ENCODE measurements at regions of chr5 and their contacts with region 1.

Region 1: GRCh38 chr5:43120720-43121564 is at the start of gene ZNF131:
- DNase-seq: peak; percentile 97
- ATAC-seq: peak; percentile 87
- H3K4me3 Mint-ChIP-seq: peak within 1 kb of the TSS; percentile 85
- H3K27ac Mint-ChIP-seq: peak within 1 kb of the TSS; percentile 94
- H3K4me1 Mint-ChIP-seq: peaks cover 37% of the 10 kb centered on the region
- H3K27me3 Mint-ChIP-seq: peaks cover 4% of the 10 kb centered on the region
- total RNA-seq, gene ZNF131: 45.8 to 52.8 TPM

Region 2: DNA sequence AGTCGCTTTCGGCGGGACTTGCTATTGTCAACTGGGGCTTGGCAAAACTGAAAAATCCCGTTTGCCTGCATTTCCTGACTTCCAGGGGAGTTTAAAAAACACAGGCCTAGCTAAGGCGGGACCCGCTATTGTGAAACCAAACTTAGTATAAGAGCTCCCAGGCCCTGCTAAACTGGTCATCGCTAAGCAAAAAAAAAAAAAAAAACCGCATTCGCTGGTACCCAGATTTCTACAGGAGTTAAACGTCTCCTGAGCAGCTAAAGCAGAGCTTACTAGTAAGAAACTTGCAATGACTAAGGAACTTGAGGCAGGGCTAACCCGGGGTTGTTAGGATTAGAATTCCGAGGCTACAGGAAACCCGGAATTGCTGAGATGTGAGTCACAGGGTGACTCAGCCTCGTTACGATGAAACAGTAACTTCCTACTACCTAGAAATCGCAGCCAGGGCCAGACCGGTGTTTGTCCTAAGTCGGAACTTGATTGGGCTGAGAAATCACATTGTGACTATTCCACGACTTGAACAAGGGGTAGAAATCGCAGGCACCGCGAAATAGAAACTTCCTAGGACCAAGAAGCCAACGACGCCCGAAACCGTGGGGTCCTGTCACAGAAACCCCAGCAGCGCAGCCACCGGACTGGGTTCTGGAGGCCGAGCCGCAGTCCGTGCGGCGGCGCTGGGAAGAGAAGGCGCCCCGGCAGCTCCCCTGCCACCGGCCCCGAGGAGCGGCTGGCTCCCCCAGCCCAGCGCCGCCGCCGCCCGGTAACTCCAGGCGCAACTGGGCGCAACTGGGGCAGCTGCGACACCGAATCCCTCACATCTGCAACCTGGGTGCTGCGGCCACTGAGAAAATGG is 170.3 kb before region 1 on chr5:
- CTCF ChIA-PET with region 1: interaction called, 5 read pairs
- POLR2A ChIA-PET with region 1: interaction called, 19 read pairs
- DNase-seq: peak; percentile 73
- ATAC-seq: peak; percentile 38
- H3K4me3 Mint-ChIP-seq: peak overlapping the region; percentile 96
- H3K27ac Mint-ChIP-seq: peak overlapping the region; percentile 100
- H3K4me1 Mint-ChIP-seq: peaks cover 43% of the 10 kb centered on the region
- H3K27me3 Mint-ChIP-seq: no peaks in the 10 kb centered on the region

Region 3: DNA sequence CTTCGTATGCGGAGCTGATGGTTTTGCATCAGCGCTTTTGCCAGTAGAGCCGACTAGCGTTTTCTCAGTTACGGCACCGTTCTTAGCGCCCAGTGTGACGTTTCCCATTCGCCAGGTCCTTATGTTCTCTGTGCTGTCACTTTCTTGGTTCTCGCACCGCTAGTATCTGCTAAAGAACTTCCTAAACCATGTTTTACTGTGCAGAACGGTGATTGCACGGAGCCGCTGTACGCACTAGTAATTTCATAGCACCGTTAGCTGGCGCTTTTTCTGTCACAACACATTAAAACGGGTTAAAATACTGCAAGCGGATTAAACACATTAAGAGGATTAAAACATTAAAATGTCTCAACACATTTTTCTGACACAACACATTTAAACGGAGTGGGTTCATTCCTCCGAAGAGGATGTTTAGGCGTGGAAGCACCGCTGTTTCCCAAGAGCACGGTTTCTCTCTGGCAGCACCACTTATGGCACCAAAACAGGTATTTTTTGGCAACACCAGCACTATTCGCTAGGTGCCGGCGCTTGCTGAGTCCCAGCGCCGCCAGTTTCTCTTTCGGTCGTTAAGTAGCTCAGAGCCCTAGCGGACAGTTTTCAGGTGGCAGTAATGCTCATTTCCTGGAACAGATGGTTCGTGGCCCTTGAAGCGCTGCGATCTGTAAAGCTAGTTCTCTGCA is 101.2 kb before region 1 on chr5:
- CTCF ChIA-PET with region 1: no interaction called
- POLR2A ChIA-PET with region 1: interaction called, 20 read pairs
- DNase-seq: peak; percentile 94
- ATAC-seq: peak; percentile 73
- H3K4me3 Mint-ChIP-seq: peak overlapping the region; percentile 95
- H3K27ac Mint-ChIP-seq: peak overlapping the region; percentile 99
- H3K4me1 Mint-ChIP-seq: peaks cover 36% of the 10 kb centered on the region
- H3K27me3 Mint-ChIP-seq: no peaks in the 10 kb centered on the region

Region 4: GRCh38 chr5:43066799-43067741 is 53.9 kb before region 1 on chr5:
- CTCF ChIA-PET with region 1: interaction called, 5 read pairs
- POLR2A ChIA-PET with region 1: interaction called, 41 read pairs
- DNase-seq: peak; percentile 91
- ATAC-seq: peak; percentile 59
- H3K4me3 Mint-ChIP-seq: peak overlapping the region; percentile 94
- H3K27ac Mint-ChIP-seq: peak overlapping the region; percentile 99
- H3K4me1 Mint-ChIP-seq: peaks cover 43% of the 10 kb centered on the region
- H3K27me3 Mint-ChIP-seq: no peaks in the 10 kb centered on the region

Region 5: DNA sequence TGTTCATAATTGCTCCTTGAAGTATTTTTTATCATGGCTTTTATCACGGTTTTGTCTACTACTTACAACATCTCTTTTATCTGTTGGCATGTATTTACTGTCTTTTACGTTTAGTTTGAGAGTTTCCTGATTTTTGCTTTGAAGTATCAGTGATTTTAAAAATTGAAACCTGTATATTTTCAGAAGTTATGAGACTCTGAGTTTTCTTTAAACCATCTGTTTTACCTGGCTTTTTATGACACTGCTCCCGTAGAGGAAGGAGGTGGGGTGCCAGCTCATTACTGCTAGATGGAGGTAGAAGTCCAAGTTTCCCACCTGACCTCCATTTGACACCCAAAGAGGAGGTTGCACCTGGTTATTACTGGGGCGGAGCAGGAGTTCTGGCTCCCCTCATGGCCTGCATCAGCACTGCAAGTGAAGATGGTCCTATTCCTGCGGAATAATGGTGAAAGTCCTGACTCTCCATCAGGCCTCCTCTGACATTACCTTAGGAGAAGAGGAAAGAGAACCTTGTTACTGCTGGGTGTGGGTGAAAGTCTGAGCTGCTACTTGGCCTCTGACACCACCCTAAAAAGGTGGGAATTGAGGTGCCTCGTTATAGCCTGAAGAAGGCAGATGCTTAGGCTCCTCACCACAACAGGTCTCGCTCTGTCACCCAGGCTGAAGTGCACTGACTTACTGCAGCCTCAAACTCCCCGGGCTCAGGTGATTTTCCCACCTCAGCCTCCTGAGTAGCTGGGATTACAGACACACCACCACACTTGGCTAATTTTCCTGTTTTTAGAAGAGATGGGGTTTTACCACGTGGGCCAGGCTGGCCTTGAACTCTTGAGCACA is 10.1 kb before region 1 on chr5:
- CTCF ChIA-PET with region 1: interaction called, 183 read pairs
- POLR2A ChIA-PET with region 1: interaction called, 37 read pairs
- DNase-seq: peak; percentile 33
- ATAC-seq: peak; percentile 48
- H3K4me3 Mint-ChIP-seq: no peak overlapping the region
- H3K27ac Mint-ChIP-seq: no peak overlapping the region
- H3K4me1 Mint-ChIP-seq: peaks cover 29% of the 10 kb centered on the region
- H3K27me3 Mint-ChIP-seq: no peaks in the 10 kb centered on the region

Region 6: GRCh38 chr5:43215073-43215631 is 94.2 kb after region 1 on chr5:
- CTCF ChIA-PET with region 1: no interaction called
- POLR2A ChIA-PET with region 1: no interaction called
- DNase-seq: no peak
- ATAC-seq: no peak
- H3K4me3 Mint-ChIP-seq: no peak overlapping the region
- H3K27ac Mint-ChIP-seq: no peak overlapping the region
- H3K4me1 Mint-ChIP-seq: no peaks in the 10 kb centered on the region
- H3K27me3 Mint-ChIP-seq: peaks cover 16% of the 10 kb centered on the region

Region 7: DNA sequence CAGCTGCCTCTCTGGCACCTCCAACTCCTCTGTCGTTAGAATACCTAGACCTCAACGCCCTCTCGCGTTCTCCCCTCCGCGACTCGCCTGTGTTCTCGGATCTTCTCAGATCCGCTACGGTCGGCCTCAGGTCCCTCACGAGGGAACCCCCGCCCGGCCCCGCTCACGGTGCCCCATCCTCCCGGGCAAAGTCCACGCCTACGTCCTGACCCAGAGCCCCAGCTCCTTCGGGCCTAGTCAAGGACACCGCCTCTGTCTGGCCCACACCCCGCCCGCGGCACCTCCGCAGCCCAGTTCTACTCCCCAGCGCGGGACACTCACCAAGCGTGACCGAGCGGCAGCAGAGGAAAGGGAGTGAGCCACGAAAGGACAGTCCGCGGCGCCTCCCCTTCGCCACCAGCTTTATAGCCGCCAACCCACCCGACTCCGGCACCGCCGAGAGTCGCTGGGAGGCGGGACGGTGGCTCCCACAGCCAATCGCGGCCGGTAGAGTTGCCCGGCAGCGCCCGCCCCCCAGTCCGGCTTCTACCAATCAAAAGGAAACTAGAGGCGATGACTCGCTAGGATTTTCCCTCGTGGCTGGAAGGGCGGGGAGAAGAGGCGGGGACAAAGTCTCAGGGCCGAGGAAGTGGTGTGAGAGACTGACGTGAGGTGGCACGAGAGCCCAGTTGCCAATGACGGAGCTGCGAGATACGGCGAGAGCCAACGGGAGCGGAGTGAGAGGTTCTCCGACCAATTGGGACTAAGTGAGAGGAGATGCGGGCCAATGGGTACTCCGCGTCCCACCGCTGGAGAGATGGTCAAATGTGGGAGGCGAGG is 192.3 kb after region 1 on chr5 and contains the start of gene HMGCS1:
- CTCF ChIA-PET with region 1: interaction called, 24 read pairs
- POLR2A ChIA-PET with region 1: interaction called, 30 read pairs
- DNase-seq: peak; percentile 99
- ATAC-seq: peak; percentile 94
- H3K4me3 Mint-ChIP-seq: peak within 1 kb of the TSS; percentile 96
- H3K27ac Mint-ChIP-seq: peak within 1 kb of the TSS; percentile 95
- H3K4me1 Mint-ChIP-seq: peaks cover 62% of the 10 kb centered on the region
- H3K27me3 Mint-ChIP-seq: no peaks in the 10 kb centered on the region
- total RNA-seq, gene HMGCS1: 82.4 to 90.6 TPM

Region 8: DNA sequence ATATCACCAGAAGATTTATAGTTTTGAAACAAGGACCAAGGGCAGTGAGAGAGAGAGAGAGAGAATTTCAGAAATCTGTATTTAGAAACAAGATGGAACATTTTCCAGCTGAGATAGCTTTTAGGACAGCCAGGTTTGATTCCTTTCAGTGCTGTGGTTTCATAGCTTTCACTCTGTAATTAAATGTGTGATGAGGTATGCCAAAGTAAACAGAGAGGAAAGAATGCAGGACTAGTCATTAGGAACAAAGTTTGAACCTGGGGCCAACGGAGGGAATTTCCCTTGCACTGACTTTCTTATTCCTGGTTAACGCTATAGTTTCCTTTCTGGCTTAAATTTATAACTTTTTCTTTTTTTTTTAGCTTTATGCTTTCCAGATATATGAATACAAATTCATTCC is 301.2 kb after region 1 on chr5:
- CTCF ChIA-PET with region 1: no interaction called
- POLR2A ChIA-PET with region 1: no interaction called
- DNase-seq: no peak
- ATAC-seq: no peak
- H3K4me3 Mint-ChIP-seq: no peak overlapping the region
- H3K27ac Mint-ChIP-seq: no peak overlapping the region
- H3K4me1 Mint-ChIP-seq: no peaks in the 10 kb centered on the region
- H3K27me3 Mint-ChIP-seq: peaks cover 3% of the 10 kb centered on the region